Vagina (tissue), 2 donors: ENCODE measurements at regions of chr18 and their contacts with region 1.

Region 1: DNA sequence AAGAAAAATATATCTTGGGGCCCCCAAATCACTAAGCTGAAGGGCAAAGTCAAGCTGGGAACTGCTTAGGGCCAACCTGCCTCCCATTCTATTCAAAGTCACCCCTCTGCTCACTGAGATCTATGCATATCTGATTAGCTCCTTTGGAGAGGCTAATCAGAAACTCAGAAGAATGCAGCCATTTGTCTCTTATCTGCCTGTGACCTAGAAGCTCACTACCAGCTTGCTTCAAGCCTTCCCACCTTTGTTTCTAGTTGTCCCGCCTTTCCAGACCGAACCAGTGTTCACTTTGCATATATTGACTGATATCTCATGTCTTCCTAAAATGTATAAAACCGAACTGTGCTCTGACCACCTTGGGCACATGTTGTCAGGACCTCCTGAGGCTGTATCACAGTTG is 479.4 kb downstream of the METTL4 start:
- DNase-seq: no peak
- H3K4me3 ChIP-seq: no peak overlapping the region
- H3K27ac ChIP-seq: no peak overlapping the region
- H3K4me1 ChIP-seq: no peaks in the 10 kb centered on the region
- H3K27me3 ChIP-seq: no peaks in the 10 kb centered on the region
- CTCF ChIP-seq: no peak
- POLR2A ChIP-seq: no peak

Region 2: GRCh38 chr18:1840878-1841277 is 251.1 kb before region 1 on chr18:
- intact Hi-C with region 1: no loop called
- DNase-seq: no peak
- H3K4me3 ChIP-seq: no peak overlapping the region
- H3K27ac ChIP-seq: no peak overlapping the region
- H3K4me1 ChIP-seq: no peaks in the 10 kb centered on the region
- H3K27me3 ChIP-seq: no peaks in the 10 kb centered on the region
- CTCF ChIP-seq: no peak
- POLR2A ChIP-seq: no peak

Region 3: GRCh38 chr18:2312440-2312839 is 220.5 kb after region 1 on chr18:
- intact Hi-C with region 1: no loop called
- DNase-seq: no peak
- H3K4me3 ChIP-seq: no peak overlapping the region
- H3K27ac ChIP-seq: no peak overlapping the region
- H3K4me1 ChIP-seq: no peaks in the 10 kb centered on the region
- H3K27me3 ChIP-seq: no peaks in the 10 kb centered on the region
- CTCF ChIP-seq: no peak
- POLR2A ChIP-seq: no peak

Region 4: DNA sequence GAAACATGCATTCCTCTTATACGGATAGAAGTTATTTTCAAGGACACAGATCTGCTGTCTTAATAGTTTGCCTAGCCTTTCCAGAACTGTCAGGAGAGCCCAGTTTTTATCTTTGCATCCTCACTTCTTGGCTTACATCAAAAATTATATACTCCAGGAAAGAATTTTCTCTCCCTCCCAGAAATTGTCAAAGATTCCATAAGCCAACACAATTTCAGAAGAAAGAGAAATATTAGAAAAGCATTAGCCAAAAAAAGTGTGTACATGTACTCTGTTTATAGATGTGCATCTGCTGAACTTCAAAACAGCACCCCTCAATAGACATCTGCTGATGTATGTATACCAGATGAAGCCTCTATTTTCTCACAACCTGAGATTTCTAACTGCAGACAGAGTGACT is 268.9 kb after region 1 on chr18:
- intact Hi-C with region 1: no loop called
- DNase-seq: no peak
- H3K4me3 ChIP-seq: no peak overlapping the region
- H3K27ac ChIP-seq: no peak overlapping the region
- H3K4me1 ChIP-seq: no peaks in the 10 kb centered on the region
- H3K27me3 ChIP-seq: no peaks in the 10 kb centered on the region
- CTCF ChIP-seq: no peak
- POLR2A ChIP-seq: no peak

Region 5: DNA sequence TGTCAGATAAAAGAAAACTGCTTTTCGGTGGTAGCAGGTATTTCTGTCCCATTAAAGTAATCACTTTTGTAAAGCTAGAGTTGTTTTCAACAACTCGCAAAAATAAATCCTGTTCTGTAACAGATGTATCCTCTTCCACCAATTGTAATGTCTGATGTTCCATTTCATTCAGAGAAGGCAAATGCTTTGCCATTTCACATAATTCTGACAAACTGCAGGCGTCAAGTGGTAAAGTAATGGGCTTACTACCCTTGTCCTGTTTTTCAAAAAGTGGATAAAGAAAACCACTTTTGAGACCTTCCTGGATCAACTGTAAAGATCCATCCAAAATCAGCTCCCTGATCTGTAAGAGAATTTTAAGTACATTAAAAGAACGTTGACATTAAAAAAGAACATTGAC is 462.8 kb after region 1 on chr18:
- intact Hi-C with region 1: loop called (anchors 5 kb)
- DNase-seq: no peak
- H3K4me3 ChIP-seq: no peak overlapping the region
- H3K27ac ChIP-seq: no peak overlapping the region
- H3K4me1 ChIP-seq: no peaks in the 10 kb centered on the region
- H3K27me3 ChIP-seq: no peaks in the 10 kb centered on the region
- CTCF ChIP-seq: no peak
- POLR2A ChIP-seq: no peak